Activated CD4-positive, alpha-beta memory T cell treated with anti-CD3 and anti-CD28 coated beads for 36 hours (primary cell): ENCODE measurements at regions of chr3 and their contacts with region 1.

Region 1: DNA sequence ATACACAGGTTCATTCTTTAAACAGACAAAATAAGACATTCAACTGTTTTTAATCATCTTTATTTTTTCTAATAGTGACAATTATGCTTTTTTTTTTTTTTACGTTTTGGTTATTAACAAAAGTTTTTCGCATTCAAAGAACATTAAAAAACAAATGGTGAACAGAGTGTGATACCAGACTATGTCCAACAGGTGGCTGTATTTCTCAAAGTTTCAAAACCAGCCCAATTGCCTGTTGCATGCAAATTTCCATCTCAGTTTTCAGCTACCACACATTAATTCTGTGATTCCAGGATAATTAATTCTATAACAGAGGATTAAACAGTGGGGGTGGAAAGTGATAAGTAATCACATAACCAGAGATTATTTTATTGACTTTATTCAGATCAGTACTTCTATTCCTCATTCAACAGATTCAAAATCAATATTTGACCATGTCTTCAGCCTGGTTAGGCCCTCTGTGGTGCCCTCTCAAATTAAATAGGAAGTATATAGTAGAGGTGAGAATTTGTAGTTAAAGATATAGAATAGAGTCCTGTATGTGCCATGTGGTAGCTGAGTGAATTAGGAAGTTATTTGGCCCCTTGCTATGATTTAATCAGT is 122.2 kb upstream of the DCBLD2 start:
- DNase-seq: no peak
- H3K4me3 Mint-ChIP-seq: no peak overlapping the region
- H3K27ac Mint-ChIP-seq: no peak overlapping the region
- H3K4me1 Mint-ChIP-seq: no peaks in the 10 kb centered on the region
- H3K27me3 Mint-ChIP-seq: peaks cover 4% of the 10 kb centered on the region

Region 2: GRCh38 chr3:99049164-99049563 is 25.5 kb after region 1 on chr3:
- CTCF ChIA-PET with region 1: no interaction called
- POLR2A ChIA-PET with region 1: no interaction called
- intact Hi-C with region 1: no loop called
- DNase-seq: no peak
- H3K4me3 Mint-ChIP-seq: no peak overlapping the region
- H3K27ac Mint-ChIP-seq: no peak overlapping the region
- H3K4me1 Mint-ChIP-seq: no peaks in the 10 kb centered on the region
- H3K27me3 Mint-ChIP-seq: no peaks in the 10 kb centered on the region

Region 3: DNA sequence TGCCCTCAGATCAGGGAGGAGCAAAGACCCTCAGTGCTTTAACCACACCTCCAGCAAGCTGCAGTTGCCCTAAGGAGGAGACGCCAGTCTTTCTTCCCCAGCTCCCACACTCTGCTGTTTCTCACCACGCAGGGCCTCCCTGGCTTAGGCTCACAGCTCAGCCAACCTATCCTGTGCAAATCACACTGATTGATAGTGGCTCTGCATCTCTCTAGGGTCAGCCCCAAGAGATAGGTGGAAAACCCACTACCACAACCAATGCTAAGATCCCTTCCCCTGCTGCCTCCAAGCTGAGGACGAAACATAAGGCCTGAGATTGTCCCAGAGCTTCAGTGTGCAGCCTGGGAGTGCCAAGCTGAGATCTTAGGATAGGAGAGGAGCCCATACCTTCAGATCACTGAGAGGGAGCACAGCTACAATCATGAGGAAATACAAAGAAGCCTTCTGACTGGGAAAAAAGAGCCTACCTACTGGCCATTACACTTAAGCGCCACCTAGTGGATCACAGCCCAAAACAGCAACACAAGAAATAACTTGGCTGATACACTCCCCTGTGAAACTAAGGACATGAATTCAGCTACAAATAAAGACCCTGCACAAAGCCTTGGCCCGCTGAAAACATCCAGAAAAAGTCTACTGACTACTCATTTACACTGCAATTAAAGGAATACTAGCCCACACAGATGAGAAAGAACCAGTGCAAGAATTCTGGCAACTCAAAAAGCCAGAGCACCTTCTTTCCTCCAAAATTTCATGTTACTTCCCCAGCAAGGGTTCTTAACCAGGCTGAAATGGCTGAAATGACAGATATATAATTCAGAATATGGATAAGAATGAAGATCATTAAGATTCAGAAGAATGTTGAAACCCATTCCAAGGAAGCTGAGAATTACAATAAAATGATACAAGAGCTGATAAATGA is 149.3 kb after region 1 on chr3:
- CTCF ChIA-PET with region 1: interaction called, 9 read pairs
- POLR2A ChIA-PET with region 1: no interaction called
- intact Hi-C with region 1: loop called (anchors 1 kb)
- DNase-seq: peak; percentile 39
- H3K4me3 Mint-ChIP-seq: no peak overlapping the region
- H3K27ac Mint-ChIP-seq: no peak overlapping the region
- H3K4me1 Mint-ChIP-seq: no peaks in the 10 kb centered on the region
- H3K27me3 Mint-ChIP-seq: no peaks in the 10 kb centered on the region

Region 4: GRCh38 chr3:99686955-99687612 is 663.4 kb after region 1 on chr3:
- CTCF ChIA-PET with region 1: interaction called, 5 read pairs
- POLR2A ChIA-PET with region 1: no interaction called
- intact Hi-C with region 1: loop called (anchors 2 kb)
- DNase-seq: peak; percentile 58
- H3K4me3 Mint-ChIP-seq: no peak overlapping the region
- H3K27ac Mint-ChIP-seq: no peak overlapping the region
- H3K4me1 Mint-ChIP-seq: no peaks in the 10 kb centered on the region
- H3K27me3 Mint-ChIP-seq: peaks cover 13% of the 10 kb centered on the region